Activated CD4-positive, alpha-beta T cell treated with anti-CD3 and anti-CD28 coated beads, Interleukin-2, amount 10 ng/mL, durations not matched to agents 24 days and 14 days (primary cell): ENCODE measurements at regions of chr17 and their contacts with region 1.

Region 1: DNA sequence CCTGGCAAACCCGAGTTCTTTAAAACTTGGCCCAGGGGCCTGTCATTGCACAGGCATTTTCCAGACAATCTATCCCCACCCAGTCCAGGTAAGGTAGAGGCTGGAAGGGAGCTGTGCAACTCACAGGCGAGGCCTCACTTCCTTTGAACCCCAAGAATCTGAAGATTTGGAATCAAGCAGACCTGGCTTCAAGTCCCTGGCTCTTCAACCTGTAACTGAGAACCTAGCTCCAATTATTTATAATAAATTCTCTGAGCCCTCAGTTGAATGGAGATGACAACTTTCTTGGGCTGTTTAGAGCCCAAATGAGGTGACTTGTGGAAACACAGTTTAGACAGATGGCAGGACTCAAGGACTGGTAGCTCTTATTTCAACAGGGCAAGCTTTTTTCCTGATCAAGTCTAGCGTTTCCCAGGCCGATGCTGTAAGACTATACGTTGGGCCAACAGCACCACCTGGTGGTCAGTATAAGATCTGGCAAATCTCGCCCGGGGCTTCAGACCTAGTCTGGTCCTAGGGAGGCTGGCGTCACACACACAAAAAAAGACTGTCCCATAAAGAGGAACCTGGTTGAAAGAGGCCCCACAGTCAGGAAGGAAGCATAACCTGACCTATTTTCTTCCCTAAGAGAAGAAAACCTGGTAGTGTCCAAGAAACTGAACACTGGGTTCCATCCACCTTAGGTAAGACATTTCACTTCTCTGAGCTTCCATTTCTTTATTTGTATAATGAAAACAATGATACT is 117.9 kb downstream of the C17orf67 start:
- DNase-seq: peak; percentile 93
- H3K4me3 Mint-ChIP-seq: no peak overlapping the region
- H3K27ac Mint-ChIP-seq: no peak overlapping the region
- H3K4me1 Mint-ChIP-seq: no peaks in the 10 kb centered on the region
- H3K27me3 Mint-ChIP-seq: no peaks in the 10 kb centered on the region

Region 2: GRCh38 chr17:56499799-56500388 is 215.9 kb before region 1 on chr17:
- intact Hi-C with region 1: loop called (anchors 5 kb)
- DNase-seq: peak; percentile 65
- H3K4me3 Mint-ChIP-seq: no peak overlapping the region
- H3K27ac Mint-ChIP-seq: no peak overlapping the region
- H3K4me1 Mint-ChIP-seq: no peaks in the 10 kb centered on the region
- H3K27me3 Mint-ChIP-seq: peaks cover 11% of the 10 kb centered on the region

Region 3: GRCh38 chr17:56779898-56780733 is 64.3 kb after region 1 on chr17:
- intact Hi-C with region 1: loop called (anchors 1 kb)
- DNase-seq: peak; percentile 97
- H3K4me3 Mint-ChIP-seq: peak overlapping the region; percentile 89
- H3K27ac Mint-ChIP-seq: peak overlapping the region; percentile 86
- H3K4me1 Mint-ChIP-seq: peaks cover 33% of the 10 kb centered on the region
- H3K27me3 Mint-ChIP-seq: peaks cover 4% of the 10 kb centered on the region

Region 4: DNA sequence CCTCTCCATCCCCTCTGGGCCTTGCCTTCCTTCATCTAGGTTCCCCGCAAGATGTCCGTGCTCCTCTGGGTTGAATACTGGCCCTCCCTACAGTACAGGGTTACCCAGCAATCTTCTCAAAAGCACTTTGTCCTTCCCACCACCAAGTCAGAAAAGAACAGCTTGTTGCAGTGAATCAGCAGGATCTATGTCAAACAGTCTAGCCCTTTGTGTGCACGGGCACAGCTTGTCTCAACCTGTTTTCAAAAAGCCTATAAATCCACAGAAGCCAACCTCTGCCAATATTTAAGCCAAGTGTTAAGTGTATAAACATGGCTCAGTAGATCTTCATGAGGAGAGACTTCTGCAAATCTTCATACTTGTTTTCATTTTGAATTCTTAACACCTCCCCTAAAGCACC is 92.7 kb after region 1 on chr17:
- intact Hi-C with region 1: no loop called
- DNase-seq: no peak
- H3K4me3 Mint-ChIP-seq: no peak overlapping the region
- H3K27ac Mint-ChIP-seq: no peak overlapping the region
- H3K4me1 Mint-ChIP-seq: peaks cover 5% of the 10 kb centered on the region
- H3K27me3 Mint-ChIP-seq: no peaks in the 10 kb centered on the region